PC-9 (cell line): ENCODE measurements at regions of chr2 and their contacts with region 1.

Region 1: GRCh38 chr2:231996797-231997540 is 35.5 kb downstream of the DIS3L2 start:
- DNase-seq: no peak
- H3K4me3 ChIP-seq: no peak overlapping the region
- H3K27ac ChIP-seq: no peak overlapping the region
- H3K4me1 ChIP-seq: no peaks in the 10 kb centered on the region
- H3K27me3 ChIP-seq: no peaks in the 10 kb centered on the region
- CTCF ChIP-seq: no peak

Region 2: GRCh38 chr2:231961349-231962166 is 35.4 kb before region 1 on chr2 and contains the start of gene DIS3L2:
- CTCF ChIA-PET with region 1: no interaction called
- POLR2A ChIA-PET with region 1: interaction called, 33 read pairs
- intact Hi-C with region 1: no loop called
- DNase-seq: peak; percentile 64 to 74
- H3K4me3 ChIP-seq: peak within 1 kb of the TSS; percentile 99
- H3K27ac ChIP-seq: peak within 1 kb of the TSS; percentile 56
- H3K4me1 ChIP-seq: peaks cover 23% of the 10 kb centered on the region
- H3K27me3 ChIP-seq: no peaks in the 10 kb centered on the region
- CTCF ChIP-seq: no peak
- total RNA-seq, gene DIS3L2: 30.4 and 39.1 TPM in 2 replicates

Region 3: DNA sequence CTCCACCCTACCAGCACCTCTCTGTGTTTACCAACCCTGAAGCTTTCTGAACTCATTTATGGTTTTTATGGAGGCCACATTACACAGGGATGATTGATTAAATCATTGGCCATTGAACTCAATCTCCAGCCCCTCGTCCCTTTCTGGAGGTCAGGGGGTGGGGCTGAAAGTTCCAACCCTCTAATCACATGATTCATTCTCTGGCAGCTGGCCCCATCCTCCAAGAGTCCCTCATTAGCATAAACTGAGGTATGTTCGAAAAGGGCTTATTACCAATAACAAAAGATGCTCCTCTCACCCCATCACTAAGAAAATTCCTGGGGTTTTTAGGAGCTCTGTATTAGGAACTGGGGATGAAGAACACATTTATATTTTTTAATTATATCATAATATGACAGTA is 56.8 kb after region 1 on chr2:
- CTCF ChIA-PET with region 1: no interaction called
- POLR2A ChIA-PET with region 1: interaction called, 10 read pairs
- intact Hi-C with region 1: no loop called
- DNase-seq: no peak
- H3K4me3 ChIP-seq: no peak overlapping the region
- H3K27ac ChIP-seq: no peak overlapping the region
- H3K4me1 ChIP-seq: no peaks in the 10 kb centered on the region
- H3K27me3 ChIP-seq: no peaks in the 10 kb centered on the region
- CTCF ChIP-seq: no peak

Region 4: GRCh38 chr2:232174662-232175061 is 177.7 kb after region 1 on chr2:
- CTCF ChIA-PET with region 1: no interaction called
- POLR2A ChIA-PET with region 1: no interaction called
- intact Hi-C with region 1: no loop called
- DNase-seq: no peak
- H3K4me3 ChIP-seq: no peak overlapping the region
- H3K27ac ChIP-seq: no peak overlapping the region
- H3K4me1 ChIP-seq: no peaks in the 10 kb centered on the region
- H3K27me3 ChIP-seq: no peaks in the 10 kb centered on the region
- CTCF ChIP-seq: no peak